Activated naive CD4-positive, alpha-beta T cell treated with anti-CD3 and anti-CD28 coated beads for 36 hours (primary cell): ENCODE measurements at regions of chr1 and their contacts with region 1.

Region 1: GRCh38 chr1:183590244-183591191 is at the start of gene NCF2:
- DNase-seq: peak; percentile 80
- H3K4me3 Mint-ChIP-seq: peak within 1 kb of the TSS; percentile 49
- H3K27ac Mint-ChIP-seq: peak within 1 kb of the TSS; percentile 93
- H3K4me1 Mint-ChIP-seq: peaks cover 42% of the 10 kb centered on the region
- H3K27me3 Mint-ChIP-seq: no peaks in the 10 kb centered on the region
- total RNA-seq, gene NCF2: 14.0 to 14.3 TPM

Region 2: GRCh38 chr1:183543619-183544204 is 46.8 kb before region 1 on chr1:
- CTCF ChIA-PET with region 1: no interaction called
- intact Hi-C with region 1: loop called (anchors 2 kb)
- DNase-seq: no peak
- H3K4me3 Mint-ChIP-seq: no peak overlapping the region
- H3K27ac Mint-ChIP-seq: peak overlapping the region; percentile 43
- H3K4me1 Mint-ChIP-seq: no peaks in the 10 kb centered on the region
- H3K27me3 Mint-ChIP-seq: no peaks in the 10 kb centered on the region

Region 3: GRCh38 chr1:183567584-183567983 is 22.9 kb before region 1 on chr1:
- CTCF ChIA-PET with region 1: interaction called, 3 read pairs
- intact Hi-C with region 1: loop called (anchors 1 kb)
- DNase-seq: peak; percentile 38
- H3K4me3 Mint-ChIP-seq: no peak overlapping the region
- H3K27ac Mint-ChIP-seq: no peak overlapping the region
- H3K4me1 Mint-ChIP-seq: peaks cover 19% of the 10 kb centered on the region
- H3K27me3 Mint-ChIP-seq: peaks cover 12% of the 10 kb centered on the region

Region 4: GRCh38 chr1:184289825-184290550 is 699.5 kb after region 1 on chr1:
- CTCF ChIA-PET with region 1: no interaction called
- intact Hi-C with region 1: no loop called
- DNase-seq: peak; percentile 17
- H3K4me3 Mint-ChIP-seq: no peak overlapping the region
- H3K27ac Mint-ChIP-seq: no peak overlapping the region
- H3K4me1 Mint-ChIP-seq: no peaks in the 10 kb centered on the region
- H3K27me3 Mint-ChIP-seq: no peaks in the 10 kb centered on the region